K562 (cell line): ENCODE measurements at regions of chr9 and their contacts with region 1.

Region 1: GRCh38 chr9:3732077-3733038 is 206.6 kb upstream of the RFX3 start:
- DNase-seq: peak; percentile 17 to 50 (median 23)
- ATAC-seq: peak; percentile 93
- H3K4me3 ChIP-seq: no peak overlapping the region
- H3K27ac ChIP-seq: no peak overlapping the region
- H3K4me1 ChIP-seq: no peaks in the 10 kb centered on the region; a peak in 1 of 5 replicates
- H3K27me3 ChIP-seq: no peaks in the 10 kb centered on the region
- CTCF ChIP-seq: peak; percentile 25 to 68 (median 44); a peak in 4 of 6 replicates
- EP300 ChIP-seq: no peak
- POLR2A ChIP-seq: no peak
- RAD21 ChIP-seq: peak; percentile 73 to 77

Region 2: GRCh38 chr9:4117835-4118610 is 385.7 kb after region 1 on chr9:
- CTCF ChIA-PET with region 1: no interaction called
- POLR2A ChIA-PET with region 1: no interaction called
- in situ Hi-C with region 1: loop called (anchors 10 kb)
- intact Hi-C with region 1: loop called (anchors 2 kb)
- DNase-seq: peak; percentile 48 to 61 (median 53)
- ATAC-seq: peak; percentile 91
- H3K4me3 ChIP-seq: no peak overlapping the region
- H3K27ac ChIP-seq: no peak overlapping the region
- H3K4me1 ChIP-seq: peaks cover 0 to 8% of the 10 kb centered on the region in 2 experiments; a peak in 1 of 5 replicates
- H3K27me3 ChIP-seq: no peaks in the 10 kb centered on the region
- CTCF ChIP-seq: peak; percentile 65 to 75 (median 69)
- EP300 ChIP-seq: no peak
- POLR2A ChIP-seq: no peak
- RAD21 ChIP-seq: peak; percentile 46 to 62

Region 3: DNA sequence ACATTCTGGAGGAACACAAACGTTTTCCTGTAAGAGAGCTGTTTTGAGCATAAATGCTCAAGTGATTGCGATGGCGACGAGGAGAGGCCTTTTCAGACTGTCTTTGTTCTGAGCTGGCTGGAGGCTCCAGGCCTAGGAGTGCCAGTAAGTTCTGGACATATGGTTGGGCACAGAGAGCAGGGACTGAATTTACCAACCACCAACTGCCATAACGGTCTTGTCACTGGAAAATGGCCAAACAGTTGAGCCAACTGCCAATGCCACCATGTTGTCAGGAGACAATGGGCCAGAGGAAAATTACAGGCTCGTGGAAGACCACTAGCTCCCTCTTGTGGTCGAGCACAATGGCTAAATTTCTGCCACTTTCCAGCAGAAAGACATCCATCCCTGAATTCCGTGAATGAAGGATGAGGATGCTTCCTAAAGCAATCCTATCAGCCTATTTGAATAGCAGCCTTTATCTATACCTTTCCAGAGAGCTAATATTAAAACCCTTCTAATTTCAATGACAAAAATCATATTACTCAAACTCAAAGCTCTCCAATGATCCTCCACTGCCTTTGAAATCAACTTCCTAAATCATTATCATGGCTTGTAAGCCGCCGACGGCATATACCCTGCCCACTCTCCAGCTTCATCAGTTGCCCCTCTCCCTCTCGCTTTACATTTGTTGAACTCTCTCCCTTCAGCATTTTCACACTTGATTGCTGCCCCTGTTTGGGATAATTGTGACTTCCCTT is 634.4 kb after region 1 on chr9:
- CTCF ChIA-PET with region 1: no interaction called
- POLR2A ChIA-PET with region 1: no interaction called
- in situ Hi-C with region 1: loop called (anchors 25 kb)
- intact Hi-C with region 1: no loop called
- DNase-seq: peak; percentile 25 to 40 (median 28)
- ATAC-seq: peak; percentile 58; the same call in 2 of the 3 replicates
- H3K4me3 ChIP-seq: no peak overlapping the region
- H3K27ac ChIP-seq: no peak overlapping the region
- H3K4me1 ChIP-seq: no peaks in the 10 kb centered on the region
- H3K27me3 ChIP-seq: no peaks in the 10 kb centered on the region; a peak in 1 of 5 replicates
- CTCF ChIP-seq: peak; percentile 57 to 71 (median 69)
- EP300 ChIP-seq: no peak
- POLR2A ChIP-seq: no peak
- RAD21 ChIP-seq: peak; percentile 45 to 66; a peak in 3 of 4 replicates